ENCODE measurements at regions of chr13 and their contacts with region 1.

Region 1: GRCh38 chr13:79775830-79776229 is 294.9 kb downstream of the NDFIP2 start:
- DNase-seq: peak; percentile 54 to 66
- H3K4me3 ChIP-seq: no peak overlapping the region
- H3K27ac ChIP-seq: no peak overlapping the region
- H3K4me1 ChIP-seq: peaks cover 18% of the 10 kb centered on the region
- H3K27me3 ChIP-seq: no peaks in the 10 kb centered on the region
- CTCF ChIP-seq: peak; percentile 73

Region 2: GRCh38 chr13:79631051-79631659 is 144.7 kb before region 1 on chr13:
- CTCF ChIA-PET with region 1: no interaction called
- POLR2A ChIA-PET with region 1: no interaction called
- intact Hi-C with region 1: loop called (anchors 1 kb)
- DNase-seq: peak; percentile 59 to 90
- H3K4me3 ChIP-seq: no peak overlapping the region
- H3K27ac ChIP-seq: no peak overlapping the region
- H3K4me1 ChIP-seq: peaks cover 4% of the 10 kb centered on the region; the same call in 1 of the 2 replicates
- H3K27me3 ChIP-seq: no peaks in the 10 kb centered on the region
- CTCF ChIP-seq: peak; percentile 67

Region 3: GRCh38 chr13:79936368-79937136 is 160.7 kb after region 1 on chr13:
- CTCF ChIA-PET with region 1: no interaction called
- POLR2A ChIA-PET with region 1: no interaction called
- intact Hi-C with region 1: loop called (anchors 2 kb)
- DNase-seq: peak; percentile 63 to 98
- H3K4me3 ChIP-seq: peak overlapping the region; percentile 6; the same call in 1 of the 2 replicates
- H3K27ac ChIP-seq: peak overlapping the region; percentile 92
- H3K4me1 ChIP-seq: peaks cover 26% of the 10 kb centered on the region
- H3K27me3 ChIP-seq: no peaks in the 10 kb centered on the region
- CTCF ChIP-seq: no peak

Region 4: GRCh38 chr13:80132741-80133601 is 357.1 kb after region 1 on chr13:
- CTCF ChIA-PET with region 1: no interaction called
- POLR2A ChIA-PET with region 1: no interaction called
- intact Hi-C with region 1: loop called (anchors 5 kb)
- DNase-seq: peak; percentile 36 to 81
- H3K4me3 ChIP-seq: peak overlapping the region; percentile 46
- H3K27ac ChIP-seq: peak overlapping the region; percentile 47
- H3K4me1 ChIP-seq: peaks cover 35% of the 10 kb centered on the region
- H3K27me3 ChIP-seq: no peaks in the 10 kb centered on the region
- CTCF ChIP-seq: no peak